Mucosa of descending colon (tissue), 3 donors: ENCODE measurements at regions of chr13 and their contacts with region 1.

Region 1: GRCh38 chr13:96650301-96650886 is 343.9 kb downstream of the OXGR1 start:
- DNase-seq: no peak
- ATAC-seq: no peak
- H3K4me3 ChIP-seq: no peak overlapping the region
- H3K4me1 ChIP-seq: no peaks in the 10 kb centered on the region
- CTCF ChIP-seq: no peak

Region 2: DNA sequence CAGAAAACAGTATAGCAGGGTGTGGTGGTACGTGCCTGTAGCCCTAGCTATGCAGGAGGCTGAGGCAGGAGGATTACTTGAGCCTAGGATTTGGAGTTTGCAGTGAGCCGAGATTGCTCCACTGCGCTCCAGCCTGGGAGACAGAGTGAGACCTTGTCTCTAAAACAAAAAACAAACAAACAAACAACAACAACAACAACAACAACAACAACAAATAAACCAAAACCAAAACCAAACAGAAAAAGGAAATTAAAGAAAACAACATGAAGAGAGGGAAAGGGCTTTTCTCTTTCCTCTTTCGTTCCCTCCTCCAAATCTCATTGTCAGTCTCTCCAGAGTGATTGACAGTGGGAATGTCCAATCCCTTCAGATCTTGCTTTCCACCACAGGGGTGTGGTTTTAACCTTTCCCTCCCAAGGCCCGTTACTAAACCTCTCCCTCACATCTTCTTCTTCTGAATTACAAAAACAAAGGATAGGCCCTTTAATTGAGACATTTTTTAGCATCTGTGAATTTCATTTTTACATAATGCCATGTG is 219.3 kb before region 1 on chr13:
- intact Hi-C with region 1: no loop called
- DNase-seq: no peak
- ATAC-seq: no peak
- H3K4me3 ChIP-seq: no peak overlapping the region
- H3K4me1 ChIP-seq: no peaks in the 10 kb centered on the region
- CTCF ChIP-seq: no peak

Region 3: GRCh38 chr13:96533408-96533807 is 117.0 kb before region 1 on chr13:
- intact Hi-C with region 1: loop called in 1 of 2 experiments (anchors 10 kb)
- DNase-seq: no peak
- ATAC-seq: no peak
- H3K4me3 ChIP-seq: no peak overlapping the region
- H3K4me1 ChIP-seq: no peaks in the 10 kb centered on the region
- CTCF ChIP-seq: no peak